ENCODE measurements at regions of chr7 and their contacts with region 1.

Region 1: GRCh38 chr7:35716038-35716803 is 21.3 kb upstream of the HERPUD2 start:
- DNase-seq: peak in 9 of 10 donors; percentile 62 to 86 (median 71)
- H3K4me3 ChIP-seq: peak overlapping the region; percentile 11 to 73 (median 47)
- H3K27ac ChIP-seq: peak overlapping the region; percentile 69 to 98 (median 93)
- H3K27me3 ChIP-seq: no peaks in the 10 kb centered on the region
- CTCF ChIP-seq: peak in 3 of 56 donors; percentile 3 to 7 (median 5)

Region 2: DNA sequence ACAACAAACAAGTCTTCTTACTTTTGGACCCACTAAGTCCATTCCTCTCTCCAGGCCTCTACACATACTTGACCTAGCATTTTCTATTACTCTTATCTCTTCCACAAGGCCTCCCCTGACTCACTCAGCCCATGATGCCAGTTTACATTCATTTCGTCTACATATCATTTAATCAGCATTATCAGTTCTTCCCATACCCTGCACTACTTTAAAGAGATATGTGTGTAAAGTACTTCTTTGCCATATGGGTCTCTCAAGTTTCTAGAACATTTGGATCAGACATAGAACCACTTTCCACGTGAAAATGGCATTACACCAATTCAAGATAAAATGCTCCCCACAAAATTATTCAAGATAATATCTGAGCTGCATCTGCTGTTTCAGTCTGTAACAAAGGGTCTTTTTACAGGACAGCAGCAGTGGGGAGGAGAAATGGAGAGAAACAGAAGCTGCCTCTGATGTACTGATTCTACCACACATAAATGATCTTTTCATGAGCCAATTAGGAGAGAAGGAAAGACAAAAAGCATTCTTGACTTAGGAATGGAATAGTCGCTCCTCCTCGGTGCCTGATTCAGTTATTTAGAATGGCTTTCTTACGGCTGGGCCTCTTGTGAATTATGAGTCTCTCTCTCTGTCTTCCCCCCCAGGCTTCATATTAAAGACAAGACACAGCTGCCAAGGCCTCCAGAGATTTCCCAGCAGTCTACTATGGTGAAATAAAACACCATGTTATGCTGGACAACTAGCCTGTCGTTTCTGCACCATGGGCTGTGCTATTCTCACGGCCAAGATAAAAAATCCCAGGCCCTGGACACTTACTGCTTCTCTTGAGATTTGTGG is 37.8 kb after region 1 on chr7:
- intact Hi-C with region 1: loop called in 1 of 2 experiments (anchors 1 kb)
- DNase-seq: no peak
- H3K4me3 ChIP-seq: peak overlapping the region in 10 of 59 donors; percentile 2 to 30 (median 12)
- H3K27ac ChIP-seq: peak overlapping the region; percentile 43 to 99 (median 94)
- H3K27me3 ChIP-seq: no peaks in the 10 kb centered on the region
- CTCF ChIP-seq: peak in 2 of 56 donors; percentile 6 to 16

Measured in dorsolateral prefrontal cortex (tissue), 120 donors.